AG04449 (cell line): ENCODE measurements at regions of chr17 and their contacts with region 1.

Region 1: DNA sequence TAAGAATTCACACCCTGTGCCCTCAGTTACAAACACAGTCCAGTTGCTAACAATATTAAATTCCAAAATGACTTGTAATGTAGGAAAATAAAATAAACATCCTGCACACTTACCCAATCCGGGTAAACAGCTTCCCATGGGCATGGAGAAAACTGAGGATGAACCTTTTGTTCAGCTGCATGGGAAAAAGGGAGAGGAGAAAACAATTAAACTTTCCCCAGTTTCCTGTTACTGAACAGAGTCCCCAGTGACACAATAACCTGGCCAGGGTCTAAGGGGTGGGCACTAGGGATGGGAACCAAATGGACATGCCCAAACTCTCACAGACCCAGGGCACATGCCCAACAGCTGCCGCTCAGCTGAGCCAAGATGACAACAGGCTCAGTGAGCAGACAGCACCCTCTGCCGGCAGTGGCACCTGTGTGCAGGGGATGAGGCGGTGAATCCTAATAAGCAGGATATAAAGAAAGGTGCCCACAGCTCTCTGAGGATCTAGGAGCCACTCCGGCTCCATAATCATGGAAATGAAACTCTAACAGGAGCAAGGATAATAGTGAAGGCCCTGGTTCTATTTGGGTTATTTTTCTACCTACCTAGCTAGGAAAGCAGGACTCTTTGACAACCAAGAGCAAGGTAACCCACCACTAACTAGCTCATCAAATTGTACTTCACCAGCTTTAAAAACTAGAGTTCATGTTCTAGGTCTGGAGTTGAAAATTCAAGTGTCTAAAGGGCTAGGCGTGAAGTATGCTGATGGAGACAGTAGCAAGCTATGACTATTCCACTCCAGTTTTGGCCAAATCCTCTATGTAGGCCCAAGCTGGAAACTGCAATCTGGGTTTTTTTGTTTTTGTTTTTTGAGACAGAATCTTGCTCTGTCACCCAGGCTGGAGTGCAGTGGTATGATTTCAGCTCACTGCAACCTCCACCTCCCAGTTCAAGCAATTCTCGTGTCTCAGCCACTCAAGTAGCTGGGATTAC is 58.8 kb downstream of the SMG6 start:
- DNase-seq: no peak
- H3K4me3 ChIP-seq: no peak overlapping the region
- CTCF ChIP-seq: peak; percentile 97

Region 2: GRCh38 chr17:2054512-2055291 is 190.1 kb before region 1 on chr17 and contains the start of gene HIC1:
- CTCF ChIA-PET with region 1: interaction called, 348 read pairs
- POLR2A ChIA-PET with region 1: interaction called, 59 read pairs
- DNase-seq: no peak
- H3K4me3 ChIP-seq: peak within 1 kb of the TSS; percentile 66
- CTCF ChIP-seq: peak; percentile 73

Region 3: DNA sequence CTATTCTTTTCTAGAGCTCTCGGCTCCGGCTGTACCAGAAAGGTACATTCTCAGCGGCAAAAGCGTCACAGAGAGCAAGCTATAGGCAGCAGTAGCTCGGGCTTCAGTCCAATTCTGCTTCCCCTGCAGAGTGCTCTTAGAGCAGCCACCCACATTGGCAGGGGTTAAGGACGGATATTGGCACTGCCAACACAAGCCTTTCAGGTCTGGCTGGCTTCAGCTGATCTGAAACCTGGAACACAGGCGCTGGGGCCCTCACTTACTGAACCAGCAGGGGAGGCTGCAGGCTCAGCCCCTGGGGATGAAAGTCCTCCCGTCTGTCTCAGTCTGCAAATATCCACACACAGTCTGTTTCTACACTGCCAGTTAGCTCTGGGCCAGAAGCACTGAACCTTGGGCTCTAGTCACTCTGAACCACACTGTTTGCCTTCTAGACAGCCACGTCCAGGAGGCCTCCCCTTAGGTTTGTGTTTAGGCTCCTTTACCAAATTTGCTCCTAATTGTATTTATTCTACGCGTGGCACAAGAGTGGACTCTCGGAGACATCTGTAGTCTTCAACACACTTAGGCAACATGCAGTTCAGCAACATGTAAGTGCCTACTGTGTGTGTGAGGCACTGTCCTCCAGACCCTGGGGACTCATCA is 149.8 kb before region 1 on chr17:
- CTCF ChIA-PET with region 1: interaction called, 105 read pairs
- POLR2A ChIA-PET with region 1: no interaction called
- DNase-seq: no peak
- H3K4me3 ChIP-seq: no peak overlapping the region
- CTCF ChIP-seq: peak; percentile 89

Region 4: GRCh38 chr17:2137342-2138098 is 107.3 kb before region 1 on chr17:
- CTCF ChIA-PET with region 1: interaction called, 14 read pairs
- POLR2A ChIA-PET with region 1: no interaction called
- DNase-seq: no peak
- H3K4me3 ChIP-seq: no peak overlapping the region
- CTCF ChIP-seq: no peak

Region 5: DNA sequence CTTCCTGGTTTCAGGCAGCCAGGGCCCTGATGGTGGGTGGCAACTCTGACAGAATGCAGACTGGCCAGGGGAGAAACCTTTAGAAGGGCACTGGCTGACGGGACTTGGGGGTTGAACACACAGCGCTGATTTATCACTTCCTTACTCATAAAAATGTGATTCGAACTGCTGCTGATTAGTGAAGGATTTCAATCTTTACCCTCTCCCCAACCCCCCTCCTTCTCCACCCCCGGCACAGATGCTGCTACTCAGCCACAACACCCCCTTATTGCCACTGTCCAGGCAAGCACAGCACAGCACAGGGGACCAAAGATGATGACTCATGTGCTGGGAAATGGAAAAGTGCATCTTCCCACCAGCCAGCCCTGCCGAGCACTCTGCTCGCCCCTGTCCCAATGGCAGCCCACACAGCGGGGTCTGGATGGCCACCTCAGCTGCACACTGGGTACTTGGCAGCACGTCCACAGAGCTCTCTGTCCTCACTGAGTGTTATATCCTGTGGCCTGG is 11.3 kb before region 1 on chr17:
- CTCF ChIA-PET with region 1: interaction called, 20 read pairs
- POLR2A ChIA-PET with region 1: no interaction called
- DNase-seq: no peak
- H3K4me3 ChIP-seq: no peak overlapping the region
- CTCF ChIP-seq: no peak

Region 6: DNA sequence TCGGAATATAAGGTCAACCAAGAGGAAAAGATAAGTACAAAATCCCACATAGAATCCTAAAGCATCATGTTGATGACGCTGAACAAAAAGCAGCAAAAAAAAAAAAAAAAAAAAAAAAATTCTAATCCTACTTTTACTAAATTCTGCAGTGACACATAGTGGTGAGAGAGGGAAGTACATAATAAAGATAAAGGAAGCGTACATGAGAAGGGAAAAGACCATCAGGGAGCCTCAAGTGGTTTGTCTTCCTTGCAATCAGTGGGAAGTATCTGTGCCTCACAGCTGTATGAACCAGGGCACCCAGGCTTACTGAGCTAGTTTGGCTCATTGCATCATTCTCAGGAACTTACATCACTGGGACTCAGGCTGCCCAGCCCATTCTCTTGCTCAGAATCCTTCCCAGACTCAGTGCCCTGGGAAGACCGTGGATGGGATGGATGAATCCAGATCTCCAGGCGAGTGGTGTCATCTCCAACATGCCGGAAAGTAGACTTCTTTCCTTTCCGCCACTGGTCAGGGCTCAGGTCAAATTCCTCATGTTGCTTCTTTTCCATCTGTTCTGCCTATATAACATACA is 37.5 kb after region 1 on chr17:
- CTCF ChIA-PET with region 1: interaction called, 28 read pairs
- POLR2A ChIA-PET with region 1: no interaction called
- DNase-seq: peak; percentile 55
- H3K4me3 ChIP-seq: no peak overlapping the region
- CTCF ChIP-seq: peak; percentile 33